ENCODE measurements at regions of chr7 and their contacts with region 1.

Region 1: DNA sequence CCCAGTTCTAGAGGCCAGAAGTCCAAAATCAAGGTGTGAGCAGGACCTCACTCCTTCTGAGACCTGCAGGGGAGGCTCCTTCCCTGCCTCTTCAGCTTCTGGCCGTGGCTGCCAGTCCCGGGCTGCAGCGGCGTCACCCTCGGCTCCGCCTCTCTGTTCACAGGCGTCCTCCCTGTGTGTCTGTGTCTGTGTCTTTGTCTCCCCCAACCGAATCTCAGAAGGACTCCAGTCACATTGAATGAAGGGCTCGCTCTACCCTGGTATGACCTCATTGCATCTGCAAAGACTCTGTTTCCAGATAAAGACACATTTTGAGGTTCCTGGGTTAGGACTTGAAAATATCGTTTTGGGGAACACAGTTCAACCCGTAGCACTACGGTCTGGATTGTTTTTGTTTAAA is 33.1 kb upstream of the GALNT11 start:
- DNase-seq: peak; percentile 57 to 68 (median 63)
- H3K4me3 ChIP-seq: no peak overlapping the region
- H3K4me3 Mint-ChIP-seq: peak overlapping the region in 1 of 2 donors; percentile 35
- H3K27ac ChIP-seq: no peak overlapping the region
- H3K27ac Mint-ChIP-seq: peak overlapping the region in 1 of 7 donors; percentile 69
- H3K4me1 ChIP-seq: peaks cover 11 to 13% of the 10 kb centered on the region in 2 donors
- H3K4me1 Mint-ChIP-seq: peaks cover 10% of the 10 kb centered on the region
- H3K27me3 ChIP-seq: no peaks in the 10 kb centered on the region
- H3K27me3 Mint-ChIP-seq: peaks cover 4 to 13% (median 5%) of the 10 kb centered on the region in 3 donors
- CTCF ChIP-seq: peak; percentile 37

Region 2: GRCh38 chr7:151782598-151783448 is 209.6 kb before region 1 on chr7:
- intact Hi-C with region 1: loop called in 1 of 2 experiments (anchors 10 kb)
- DNase-seq: peak; percentile 83 to 91 (median 88)
- H3K4me3 ChIP-seq: peak overlapping the region in 1 of 3 experiments; percentile 51
- H3K4me3 Mint-ChIP-seq: peak overlapping the region; percentile 64 to 67
- H3K27ac ChIP-seq: peak overlapping the region; percentile 17 to 28
- H3K27ac Mint-ChIP-seq: peak overlapping the region; percentile 70 to 88 (median 77)
- H3K4me1 ChIP-seq: peaks cover 9 to 14% of the 10 kb centered on the region in 2 donors
- H3K4me1 Mint-ChIP-seq: peaks cover 24% of the 10 kb centered on the region
- H3K27me3 ChIP-seq: no peaks in the 10 kb centered on the region
- H3K27me3 Mint-ChIP-seq: peaks cover 0 to 2% (median 1%) of the 10 kb centered on the region in 3 donors
- CTCF ChIP-seq: peak; percentile 98

Region 3: DNA sequence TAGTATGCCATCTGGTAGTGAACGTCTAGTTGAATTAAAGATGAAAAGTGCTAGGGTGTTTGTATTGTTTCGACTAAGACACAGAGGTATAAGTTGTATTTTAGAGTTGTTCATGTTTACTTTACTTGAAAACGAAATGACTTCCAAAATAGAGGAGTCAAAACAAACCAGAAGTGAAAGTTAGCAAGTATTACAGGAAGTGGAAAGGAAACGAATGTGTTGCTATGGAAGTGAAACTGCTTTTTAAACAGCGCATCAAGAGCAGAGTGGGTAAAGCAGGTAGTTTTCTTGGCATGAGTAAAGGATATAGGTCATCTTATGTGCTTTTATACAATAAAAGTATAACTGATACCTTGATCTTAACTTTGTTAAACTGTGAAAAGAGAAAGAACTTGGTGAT is 56.2 kb before region 1 on chr7:
- intact Hi-C with region 1: loop called in 1 of 2 experiments (anchors 5 kb)
- DNase-seq: peak; percentile 65 to 87 (median 85)
- H3K4me3 ChIP-seq: peak overlapping the region in 1 of 3 experiments; percentile 61
- H3K4me3 Mint-ChIP-seq: peak overlapping the region; percentile 56 to 81
- H3K27ac ChIP-seq: peak overlapping the region; percentile 92 to 93
- H3K27ac Mint-ChIP-seq: peak overlapping the region; percentile 97 to 99 (median 98)
- H3K4me1 ChIP-seq: peaks cover 90 to 91% of the 10 kb centered on the region in 2 donors
- H3K4me1 Mint-ChIP-seq: peaks cover 86% of the 10 kb centered on the region
- H3K27me3 ChIP-seq: no peaks in the 10 kb centered on the region
- H3K27me3 Mint-ChIP-seq: peaks cover 0 to 5% (median under 1%) of the 10 kb centered on the region in 3 donors
- CTCF ChIP-seq: no peak

Region 4: DNA sequence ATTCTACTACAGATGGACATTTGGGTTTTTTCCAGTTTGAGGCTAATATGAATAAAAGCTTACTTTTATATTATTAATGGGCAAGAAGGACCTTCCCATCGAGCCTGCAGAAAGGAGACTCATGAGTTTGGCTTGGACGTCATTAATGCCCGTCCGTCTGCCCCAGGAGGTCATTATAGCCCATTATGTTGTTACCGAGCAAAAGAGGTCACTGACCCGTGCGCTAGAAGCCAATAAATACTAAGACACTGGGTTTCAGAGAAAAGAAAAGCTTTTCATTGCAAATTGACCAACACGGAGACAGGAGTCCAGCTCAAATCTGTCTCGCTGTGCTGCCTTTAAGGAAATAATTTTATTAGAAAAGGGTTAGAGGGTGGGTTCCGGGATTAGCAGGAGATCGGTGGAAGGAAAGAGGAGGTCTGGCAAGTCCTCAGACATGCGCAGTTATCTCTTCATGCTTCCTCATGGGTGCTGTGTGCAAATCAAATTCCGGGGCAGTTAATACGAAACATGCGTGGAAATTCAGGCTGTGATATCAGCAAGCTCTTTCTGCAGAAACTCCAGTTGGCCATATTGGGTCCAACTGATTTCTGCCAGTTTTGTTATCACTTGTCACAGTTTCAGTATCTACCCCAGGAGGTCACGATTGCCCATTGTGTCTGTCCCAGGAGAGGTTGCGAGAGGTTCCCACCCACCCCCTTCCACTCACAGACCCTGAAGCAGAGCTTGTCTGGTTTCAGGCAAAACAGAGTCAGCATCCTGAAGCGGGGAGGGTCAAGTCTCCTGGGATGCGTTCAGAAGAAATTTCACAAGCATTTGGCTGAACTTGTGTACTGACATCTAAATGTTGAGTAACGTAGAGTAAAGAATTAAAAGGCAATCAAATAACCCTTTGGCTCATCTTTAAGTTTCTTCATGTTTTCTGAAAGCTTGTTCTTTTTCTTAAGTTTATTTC is 37.2 kb before region 1 on chr7:
- intact Hi-C with region 1: no loop called
- DNase-seq: no peak
- H3K4me3 ChIP-seq: no peak overlapping the region
- H3K4me3 Mint-ChIP-seq: peak overlapping the region in 1 of 2 donors; percentile 28
- H3K27ac ChIP-seq: no peak overlapping the region
- H3K27ac Mint-ChIP-seq: no peak overlapping the region
- H3K4me1 ChIP-seq: no peaks in the 10 kb centered on the region
- H3K4me1 Mint-ChIP-seq: no peaks in the 10 kb centered on the region
- H3K27me3 ChIP-seq: no peaks in the 10 kb centered on the region
- H3K27me3 Mint-ChIP-seq: peaks cover 3 to 4% (median 3%) of the 10 kb centered on the region in 3 donors
- CTCF ChIP-seq: no peak